ENCODE measurements at regions of chr16 and their contacts with region 1.

Region 1: DNA sequence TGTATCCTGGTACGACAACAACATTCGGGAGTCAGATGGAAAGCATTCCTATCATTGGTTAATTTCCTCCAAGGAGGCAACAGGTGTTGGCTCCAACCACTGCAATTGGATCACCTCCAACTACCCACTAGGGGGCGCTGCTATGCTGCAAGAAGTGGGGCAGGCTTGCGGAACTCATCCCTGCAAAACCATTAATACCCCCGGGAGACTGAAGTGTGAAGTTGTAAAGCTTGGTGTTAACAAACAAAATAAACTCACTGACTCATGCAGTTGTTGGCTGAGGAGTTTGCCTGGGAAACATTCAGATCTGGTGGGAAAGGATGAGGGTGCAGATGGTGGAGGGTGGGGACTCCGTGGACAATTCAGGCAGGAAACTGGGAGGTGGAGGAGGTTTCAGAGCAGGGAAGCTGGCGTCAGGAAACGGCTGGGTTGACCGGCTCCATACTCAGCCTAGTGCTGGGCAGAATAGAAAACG is 84.9 kb downstream of the HS3ST2 start:
- DNase-seq: peak; percentile 77
- ATAC-seq: peak; percentile 81

Region 2: GRCh38 chr16:22924492-22924891 is 25.6 kb after region 1 on chr16:
- intact Hi-C with region 1: no loop called
- DNase-seq: no peak
- ATAC-seq: no peak

Region 3: GRCh38 chr16:22948603-22949368 is 49.9 kb after region 1 on chr16:
- intact Hi-C with region 1: loop called (anchors 2 kb)
- DNase-seq: peak; percentile 72
- ATAC-seq: peak; percentile 72

Region 4: GRCh38 chr16:22970209-22970865 is 71.4 kb after region 1 on chr16:
- intact Hi-C with region 1: loop called (anchors 5 kb)
- DNase-seq: no peak
- ATAC-seq: no peak

Region 5: DNA sequence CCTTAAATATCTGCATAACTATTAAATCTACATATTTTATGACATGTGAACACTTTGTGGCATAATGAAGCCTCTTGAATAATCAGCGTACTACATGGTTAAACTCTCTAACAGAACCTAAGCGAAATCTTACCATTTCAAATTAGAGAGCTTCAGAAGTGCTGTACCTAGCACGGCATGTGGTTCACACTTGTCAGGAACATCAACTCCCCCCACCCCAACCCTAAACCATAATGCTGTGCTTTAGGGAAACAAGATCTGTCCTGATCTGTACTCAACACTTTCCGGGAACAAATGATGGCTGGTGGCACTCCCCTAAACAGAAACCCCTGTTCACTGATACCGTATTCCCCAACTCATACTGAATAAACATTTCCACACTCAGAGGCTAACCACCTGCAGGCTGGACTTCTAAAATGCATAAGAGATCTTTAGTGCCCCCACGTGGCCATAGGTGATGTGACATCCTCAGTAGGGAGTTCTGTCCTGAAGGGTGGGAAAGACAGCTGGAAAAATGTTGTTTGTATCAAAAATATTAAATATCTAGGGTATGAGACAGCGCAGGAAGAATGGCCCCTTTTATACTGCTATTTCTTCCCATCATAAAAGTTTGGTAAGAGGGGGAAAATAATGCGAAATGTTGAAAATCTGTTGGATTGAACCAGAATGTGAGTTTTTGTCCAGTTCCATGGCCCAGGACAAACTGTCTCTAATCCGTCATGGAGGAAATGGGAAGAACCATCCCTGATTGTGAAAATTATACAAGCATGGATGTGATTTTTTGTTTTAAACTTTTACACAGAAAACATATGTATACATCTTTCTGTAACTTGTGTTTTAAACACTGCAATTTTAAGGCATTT is 161.8 kb after region 1 on chr16:
- intact Hi-C with region 1: loop called (anchors 5 kb)
- DNase-seq: peak; percentile 67
- ATAC-seq: peak; percentile 74

Region 6: GRCh38 chr16:23155439-23156049 is 256.6 kb after region 1 on chr16:
- intact Hi-C with region 1: loop called (anchors 10 kb)
- DNase-seq: no peak
- ATAC-seq: no peak

Measured in Right ventricle myocardium inferior (tissue), 1 donor.